Ovary (tissue), 10 donors: ENCODE measurements at regions of chr13 and their contacts with region 1.

Region 1: DNA sequence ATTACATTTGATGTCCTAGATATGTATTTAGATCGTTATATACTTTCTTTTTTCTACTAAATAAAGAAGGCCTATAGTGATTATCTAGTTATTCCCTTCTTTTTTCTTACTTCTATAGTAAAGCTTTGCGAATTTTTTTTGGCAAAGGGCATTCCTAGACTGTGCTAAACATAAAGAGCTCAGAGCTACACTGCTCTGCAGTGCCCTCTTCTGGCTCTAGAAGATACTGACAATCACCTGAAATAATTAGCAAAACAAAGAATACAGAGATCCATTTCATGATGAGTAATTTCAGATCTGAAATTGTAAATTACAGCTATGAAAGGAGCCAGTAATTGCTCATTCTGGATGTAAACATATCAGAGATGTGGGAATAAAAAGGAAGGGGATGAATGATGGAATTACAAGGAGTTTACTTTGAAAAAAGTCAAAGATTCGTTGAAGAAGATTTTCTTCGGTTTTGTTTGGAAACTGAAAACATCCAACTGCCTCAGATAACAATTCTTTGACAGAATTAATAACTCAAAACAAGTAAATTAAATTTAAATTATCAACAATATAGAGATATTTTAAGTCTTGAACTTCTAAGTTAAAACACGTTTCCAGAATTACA is 288.5 kb downstream of the NALCN start:
- DNase-seq: no peak
- H3K4me3 ChIP-seq: no peak overlapping the region
- H3K27ac ChIP-seq: no peak overlapping the region
- H3K4me1 ChIP-seq: no peaks in the 10 kb centered on the region
- H3K27me3 ChIP-seq: no peaks in the 10 kb centered on the region
- CTCF ChIP-seq: peak; percentile 16 to 32 (median 27)
- EP300 ChIP-seq: no peak
- POLR2A ChIP-seq: no peak

Region 2: DNA sequence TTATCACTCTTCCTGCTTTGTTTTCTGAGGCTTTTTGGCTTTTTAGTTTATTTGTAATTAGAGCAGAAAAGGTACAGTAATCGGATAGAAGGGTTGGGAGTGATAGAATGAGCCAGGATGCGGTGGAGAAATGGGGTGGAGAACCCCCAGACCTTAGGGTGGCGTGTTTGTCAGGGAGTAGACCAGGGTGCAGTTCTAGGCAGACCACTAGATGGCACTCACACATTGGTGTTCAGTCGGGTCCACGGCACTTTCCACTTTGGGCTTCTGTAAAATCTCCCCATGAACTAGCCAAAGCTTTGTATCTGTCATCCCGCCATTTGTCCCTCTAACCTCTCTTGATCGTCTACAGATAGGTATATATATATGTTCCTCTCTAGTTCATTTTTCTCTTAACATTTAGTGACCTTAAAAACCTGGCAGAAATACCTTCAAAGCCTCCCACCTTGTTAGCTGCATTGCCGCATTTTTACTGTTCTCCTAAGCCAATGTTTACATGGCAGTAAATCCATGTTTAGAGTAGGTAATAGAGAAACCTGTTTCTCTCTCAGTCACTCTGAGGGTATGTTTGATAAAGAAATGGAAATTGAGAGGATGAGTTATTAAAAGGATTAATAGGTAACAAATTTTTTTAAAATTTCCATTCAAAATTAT is 1471.6 kb before region 1 on chr13:
- intact Hi-C with region 1: loop called in 1 of 4 experiments (anchors 10 kb)
- DNase-seq: peak; percentile 69 to 81 (median 75)
- H3K4me3 ChIP-seq: no peak overlapping the region
- H3K27ac ChIP-seq: no peak overlapping the region
- H3K4me1 ChIP-seq: no peaks in the 10 kb centered on the region
- H3K27me3 ChIP-seq: no peaks in the 10 kb centered on the region
- CTCF ChIP-seq: peak; percentile 67 to 77 (median 72)
- EP300 ChIP-seq: no peak
- POLR2A ChIP-seq: no peak

Region 3: GRCh38 chr13:101178406-101178805 is 50.6 kb after region 1 on chr13:
- intact Hi-C with region 1: no loop called
- DNase-seq: no peak
- H3K4me3 ChIP-seq: no peak overlapping the region
- H3K27ac ChIP-seq: no peak overlapping the region
- H3K4me1 ChIP-seq: no peaks in the 10 kb centered on the region
- H3K27me3 ChIP-seq: no peaks in the 10 kb centered on the region
- CTCF ChIP-seq: no peak
- EP300 ChIP-seq: no peak
- POLR2A ChIP-seq: no peak